CD14-positive monocyte (primary cell): ENCODE measurements at regions of chr2 and their contacts with region 1.

Region 1: DNA sequence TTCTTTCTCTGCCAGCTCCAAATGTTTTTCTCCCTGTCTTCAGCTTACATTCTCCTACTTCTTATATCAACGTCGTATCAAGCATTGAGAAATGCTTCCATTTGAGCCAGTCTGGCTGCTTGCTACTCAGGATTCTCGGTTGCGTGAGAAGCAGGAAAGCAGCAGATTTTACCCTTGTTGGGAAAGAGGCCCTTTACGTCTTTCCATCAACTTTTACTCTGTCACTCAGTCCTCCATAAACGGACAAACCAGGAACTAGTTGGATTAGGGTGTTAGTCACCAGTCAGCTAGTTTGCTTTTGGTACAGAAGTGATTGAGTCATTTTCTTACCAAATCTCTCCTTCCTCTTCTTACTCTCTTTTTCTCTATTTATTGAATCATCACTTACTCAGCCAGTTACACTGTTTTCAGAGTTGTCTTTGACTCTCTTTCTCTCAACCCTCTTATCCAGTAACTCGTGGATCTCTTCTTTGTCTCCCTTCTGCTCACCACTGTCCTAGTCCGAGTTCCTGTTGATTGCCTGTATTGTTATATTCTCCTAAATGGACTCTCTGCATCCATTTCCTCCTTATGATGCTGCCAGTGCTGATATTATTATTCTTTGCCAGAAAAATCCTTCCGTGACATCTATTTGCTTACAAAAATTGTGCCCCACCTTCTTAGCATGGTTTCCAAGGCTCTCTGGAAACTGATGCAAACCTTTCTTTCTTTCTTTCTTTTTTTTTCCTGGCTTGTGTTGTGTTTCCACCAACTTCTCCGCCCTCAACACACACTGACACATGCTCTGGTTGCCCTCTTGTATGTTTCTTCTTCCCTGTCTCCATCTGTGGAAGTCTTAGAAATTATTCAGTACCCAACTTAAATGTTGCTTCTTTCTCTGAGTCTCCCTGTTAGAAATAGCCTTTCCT is 61.5 kb downstream of the VRK2 start:
- DNase-seq: peak; percentile 96 to 100 (median 99)
- H3K4me3 ChIP-seq: peak overlapping the region in 2 of 3 experiments; percentile 2 to 40
- H3K4me3 Mint-ChIP-seq: peak overlapping the region; percentile 28 to 83
- H3K27ac ChIP-seq: peak overlapping the region; percentile 59 to 97
- H3K27ac Mint-ChIP-seq: peak overlapping the region; percentile 94 to 98 (median 97)
- H3K4me1 ChIP-seq: peaks cover 26 to 36% of the 10 kb centered on the region in 2 donors
- H3K4me1 Mint-ChIP-seq: peaks cover 30% of the 10 kb centered on the region
- H3K27me3 ChIP-seq: no peaks in the 10 kb centered on the region
- H3K27me3 Mint-ChIP-seq: peaks cover 0 to 3% (median 0%) of the 10 kb centered on the region in 3 donors
- CTCF ChIP-seq: no peak

Region 2: GRCh38 chr2:57890464-57890863 is 217.6 kb before region 1 on chr2:
- intact Hi-C with region 1: loop called in 1 of 2 experiments (anchors 10 kb)
- DNase-seq: peak; percentile 43 to 86 (median 51)
- H3K4me3 ChIP-seq: no peak overlapping the region
- H3K4me3 Mint-ChIP-seq: no peak overlapping the region
- H3K27ac ChIP-seq: peak overlapping the region in 1 of 2 donors; percentile 23
- H3K27ac Mint-ChIP-seq: peak overlapping the region in 3 of 7 donors; percentile 8 to 60 (median 18)
- H3K4me1 ChIP-seq: peaks cover 6 to 18% of the 10 kb centered on the region in 2 donors
- H3K4me1 Mint-ChIP-seq: peaks cover 19% of the 10 kb centered on the region
- H3K27me3 ChIP-seq: no peaks in the 10 kb centered on the region
- H3K27me3 Mint-ChIP-seq: peaks cover 0 to 2% (median 0%) of the 10 kb centered on the region in 3 donors
- CTCF ChIP-seq: no peak

Region 3: GRCh38 chr2:58046585-58047372 is 61.3 kb before region 1 on chr2 and contains the start of gene VRK2:
- intact Hi-C with region 1: loop called in 1 of 2 experiments (anchors 5 kb)
- DNase-seq: peak; percentile 80 to 84 (median 83)
- H3K4me3 ChIP-seq: peak within 1 kb of the TSS; percentile 48 to 81 (median 60)
- H3K4me3 Mint-ChIP-seq: peak within 1 kb of the TSS; percentile 94
- H3K27ac ChIP-seq: peak within 1 kb of the TSS; percentile 80 to 86
- H3K27ac Mint-ChIP-seq: peak within 1 kb of the TSS; percentile 90 to 96 (median 95)
- H3K4me1 ChIP-seq: peaks cover 16 to 26% of the 10 kb centered on the region in 2 donors
- H3K4me1 Mint-ChIP-seq: peaks cover 31% of the 10 kb centered on the region
- H3K27me3 ChIP-seq: no peaks in the 10 kb centered on the region
- H3K27me3 Mint-ChIP-seq: peaks cover 0 to 1% (median 1%) of the 10 kb centered on the region in 3 donors
- CTCF ChIP-seq: no peak
- polyA plus RNA-seq, gene VRK2: 13.5 to 31.6 (median 21.4) TPM